Naive thymus-derived CD4-positive, alpha-beta T cell (primary cell): ENCODE measurements at regions of chr7 and their contacts with region 1.

Region 1: DNA sequence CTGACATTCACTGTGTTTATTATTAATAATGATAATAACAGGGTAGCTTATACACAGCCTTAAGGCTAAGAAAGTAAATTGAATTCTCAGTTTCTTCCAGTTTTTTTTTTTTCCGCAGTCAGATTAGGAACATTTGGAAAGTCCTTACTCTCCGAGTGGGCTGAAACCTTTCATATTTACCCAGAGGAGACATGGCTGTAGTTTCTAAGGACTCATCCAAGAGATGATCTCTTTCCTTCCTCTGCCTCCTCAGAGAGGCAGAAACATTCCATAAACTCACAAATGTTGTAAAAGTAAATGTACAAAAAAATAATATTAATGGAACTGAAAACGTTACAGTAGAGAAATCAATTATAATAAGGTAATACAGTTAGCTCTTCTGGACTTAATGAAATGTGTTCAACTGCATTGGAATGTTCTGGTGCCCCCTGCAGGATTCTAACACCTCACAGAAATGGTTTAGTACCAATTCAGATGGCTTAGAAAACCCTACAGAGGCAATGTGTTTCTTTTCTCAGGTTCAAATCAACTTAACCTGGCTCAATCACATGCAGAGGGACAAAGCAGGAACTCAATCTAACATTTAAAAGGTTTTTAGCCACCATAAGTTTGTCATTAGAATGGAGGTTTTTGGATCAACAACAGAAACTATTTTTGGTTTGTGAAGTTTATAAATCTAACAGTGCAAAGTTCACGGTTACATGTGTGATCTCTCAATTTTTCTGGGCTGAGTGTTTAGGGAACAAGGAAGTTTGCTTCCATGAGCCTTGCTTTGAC is 71.7 kb downstream of the ICA1 start:
- DNase-seq: peak; percentile 11 to 73 (median 65)
- ATAC-seq: peak; percentile 89
- H3K4me3 ChIP-seq: no peak overlapping the region
- H3K4me3 Mint-ChIP-seq: no peak overlapping the region
- H3K27ac ChIP-seq: no peak overlapping the region
- H3K27ac Mint-ChIP-seq: peak overlapping the region in 2 of 9 donors; percentile 5 to 42
- H3K4me1 ChIP-seq: peaks cover 0 to 6% of the 10 kb centered on the region in 2 donors
- H3K4me1 Mint-ChIP-seq: peaks cover 7 to 33% (median 17%) of the 10 kb centered on the region in 7 donors
- H3K27me3 ChIP-seq: no peaks in the 10 kb centered on the region
- H3K27me3 Mint-ChIP-seq: peaks cover 0 to 10% (median 8%) of the 10 kb centered on the region in 5 donors

Region 2: GRCh38 chr7:7595451-7595850 is 594.9 kb before region 1 on chr7:
- CTCF ChIA-PET with region 1: interaction called, 13 read pairs
- POLR2A ChIA-PET with region 1: no interaction called
- intact Hi-C with region 1: loop called in 1 of 2 experiments (anchors 1 kb)
- DNase-seq: peak in 6 of 9 donors; percentile 14 to 45 (median 36)
- ATAC-seq: peak; percentile 65
- H3K4me3 ChIP-seq: no peak overlapping the region
- H3K4me3 Mint-ChIP-seq: no peak overlapping the region
- H3K27ac ChIP-seq: no peak overlapping the region
- H3K27ac Mint-ChIP-seq: no peak overlapping the region
- H3K4me1 ChIP-seq: peaks cover 0 to 3% of the 10 kb centered on the region in 2 donors
- H3K4me1 Mint-ChIP-seq: no peaks in the 10 kb centered on the region
- H3K27me3 ChIP-seq: no peaks in the 10 kb centered on the region
- H3K27me3 Mint-ChIP-seq: no peaks in the 10 kb centered on the region

Region 3: GRCh38 chr7:7884855-7885254 is 305.5 kb before region 1 on chr7:
- CTCF ChIA-PET with region 1: no interaction called
- POLR2A ChIA-PET with region 1: no interaction called
- intact Hi-C with region 1: loop called in 1 of 2 experiments (anchors 10 kb)
- DNase-seq: no peak
- ATAC-seq: no peak
- H3K4me3 ChIP-seq: no peak overlapping the region
- H3K4me3 Mint-ChIP-seq: no peak overlapping the region
- H3K27ac ChIP-seq: no peak overlapping the region
- H3K27ac Mint-ChIP-seq: no peak overlapping the region
- H3K4me1 ChIP-seq: no peaks in the 10 kb centered on the region
- H3K4me1 Mint-ChIP-seq: peaks cover 0 to 4% (median 0%) of the 10 kb centered on the region in 7 donors
- H3K27me3 ChIP-seq: no peaks in the 10 kb centered on the region
- H3K27me3 Mint-ChIP-seq: no peaks in the 10 kb centered on the region

Region 4: DNA sequence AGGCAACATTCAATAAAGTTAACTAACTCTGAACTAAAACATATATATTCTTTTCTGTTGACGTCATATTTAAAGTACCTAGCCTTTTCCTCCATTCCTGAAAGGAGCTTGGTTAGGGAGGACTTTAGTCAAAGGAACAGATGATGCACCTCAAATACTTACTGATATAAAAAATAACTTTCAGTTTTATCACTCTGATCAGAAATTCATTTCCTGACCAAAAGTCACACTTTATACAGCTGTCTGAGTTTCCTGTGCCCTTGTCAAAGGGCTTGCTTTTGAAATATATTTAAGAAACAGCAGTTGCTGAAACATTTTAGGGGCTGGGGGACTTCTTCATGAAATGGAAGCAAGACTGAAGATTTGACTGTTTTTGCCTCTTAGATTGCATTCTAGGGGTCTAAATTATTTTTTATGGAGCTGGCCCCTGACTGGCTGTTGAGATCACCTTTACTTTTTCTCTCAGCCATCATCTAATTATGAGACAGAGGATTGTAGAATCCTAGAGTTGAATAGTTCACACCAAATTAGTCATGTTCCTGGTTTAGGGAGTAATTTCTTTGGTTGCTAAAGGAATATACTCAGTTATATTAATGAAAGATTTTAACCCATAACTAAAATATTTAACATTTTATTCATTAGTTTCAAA is 175.1 kb before region 1 on chr7:
- CTCF ChIA-PET with region 1: no interaction called
- POLR2A ChIA-PET with region 1: no interaction called
- intact Hi-C with region 1: loop called in 1 of 2 experiments (anchors 2 kb)
- DNase-seq: peak in 7 of 9 donors; percentile 10 to 42 (median 20)
- ATAC-seq: peak; percentile 72
- H3K4me3 ChIP-seq: no peak overlapping the region
- H3K4me3 Mint-ChIP-seq: peak overlapping the region in 9 of 10 donors; percentile 28 to 79 (median 68)
- H3K27ac ChIP-seq: peak overlapping the region; percentile 34
- H3K27ac Mint-ChIP-seq: peak overlapping the region; percentile 29 to 91 (median 85)
- H3K4me1 ChIP-seq: peaks cover 26 to 42% of the 10 kb centered on the region in 2 donors
- H3K4me1 Mint-ChIP-seq: peaks cover 4 to 51% (median 32%) of the 10 kb centered on the region in 7 donors
- H3K27me3 ChIP-seq: no peaks in the 10 kb centered on the region
- H3K27me3 Mint-ChIP-seq: no peaks in the 10 kb centered on the region

Region 5: GRCh38 chr7:8084836-8085235 is 105.5 kb before region 1 on chr7:
- CTCF ChIA-PET with region 1: no interaction called
- POLR2A ChIA-PET with region 1: interaction called, 3 read pairs
- intact Hi-C with region 1: loop called in 1 of 2 experiments (anchors 5 kb)
- DNase-seq: no peak
- ATAC-seq: no peak
- H3K4me3 ChIP-seq: no peak overlapping the region
- H3K4me3 Mint-ChIP-seq: no peak overlapping the region
- H3K27ac ChIP-seq: no peak overlapping the region
- H3K27ac Mint-ChIP-seq: peak overlapping the region in 1 of 9 donors; percentile 40
- H3K4me1 ChIP-seq: no peaks in the 10 kb centered on the region
- H3K4me1 Mint-ChIP-seq: peaks cover 0 to 19% (median 1%) of the 10 kb centered on the region in 7 donors
- H3K27me3 ChIP-seq: no peaks in the 10 kb centered on the region
- H3K27me3 Mint-ChIP-seq: no peaks in the 10 kb centered on the region

Region 6: DNA sequence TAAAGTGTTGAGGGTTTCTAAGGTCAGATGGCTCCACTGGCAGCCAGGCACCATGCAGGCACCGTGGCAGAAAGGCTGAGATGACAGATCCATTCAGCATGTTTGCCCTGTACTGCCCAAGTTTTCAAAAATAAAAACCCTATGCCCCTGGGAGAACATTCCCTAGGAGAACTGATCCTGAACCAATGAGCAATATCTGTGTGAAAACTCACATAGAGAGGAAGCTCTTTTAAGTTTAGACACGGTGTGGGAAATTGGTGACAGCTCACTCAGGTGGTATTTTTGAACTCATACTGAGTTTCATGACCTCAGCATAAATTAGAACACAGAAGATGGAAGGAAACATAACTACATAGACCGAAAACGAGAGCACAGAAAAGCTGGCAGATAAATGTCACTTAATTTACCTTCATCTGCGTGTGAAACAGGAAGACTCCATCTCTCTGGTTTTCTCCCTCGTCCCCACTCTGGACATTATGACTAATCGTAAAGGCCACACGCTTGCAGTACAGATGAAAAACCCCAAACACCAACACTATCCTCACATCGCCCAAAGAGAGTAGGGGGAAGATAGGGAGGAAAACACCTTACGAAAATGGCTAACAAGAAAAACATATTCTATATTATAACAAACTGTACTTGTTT is 56.1 kb before region 1 on chr7:
- CTCF ChIA-PET with region 1: interaction called, 5 read pairs
- POLR2A ChIA-PET with region 1: interaction called, 5 read pairs
- intact Hi-C with region 1: loop called (anchors 1 to 2 kb)
- DNase-seq: peak in 8 of 9 donors; percentile 25 to 51 (median 44)
- ATAC-seq: peak; percentile 32
- H3K4me3 ChIP-seq: peak overlapping the region; percentile 7
- H3K4me3 Mint-ChIP-seq: peak overlapping the region; percentile 25 to 82 (median 61)
- H3K27ac ChIP-seq: peak overlapping the region; percentile 47
- H3K27ac Mint-ChIP-seq: peak overlapping the region; percentile 78 to 98 (median 94)
- H3K4me1 ChIP-seq: peaks cover 45 to 50% of the 10 kb centered on the region in 2 donors
- H3K4me1 Mint-ChIP-seq: peaks cover 38 to 65% (median 56%) of the 10 kb centered on the region in 7 donors
- H3K27me3 ChIP-seq: no peaks in the 10 kb centered on the region
- H3K27me3 Mint-ChIP-seq: no peaks in the 10 kb centered on the region

Region 7: GRCh38 chr7:8217200-8218068 is 27.1 kb after region 1 on chr7:
- CTCF ChIA-PET with region 1: interaction called, 3 read pairs
- POLR2A ChIA-PET with region 1: no interaction called
- intact Hi-C with region 1: loop called in 1 of 2 experiments (anchors 1 kb)
- DNase-seq: peak in 7 of 9 donors; percentile 42 to 76 (median 68)
- ATAC-seq: peak; percentile 84
- H3K4me3 ChIP-seq: no peak overlapping the region
- H3K4me3 Mint-ChIP-seq: no peak overlapping the region
- H3K27ac ChIP-seq: no peak overlapping the region
- H3K27ac Mint-ChIP-seq: peak overlapping the region in 1 of 9 donors; percentile 22
- H3K4me1 ChIP-seq: no peaks in the 10 kb centered on the region
- H3K4me1 Mint-ChIP-seq: peaks cover 0 to 16% (median 3%) of the 10 kb centered on the region in 7 donors
- H3K27me3 ChIP-seq: no peaks in the 10 kb centered on the region
- H3K27me3 Mint-ChIP-seq: no peaks in the 10 kb centered on the region